Activated CD4-positive, alpha-beta memory T cell treated with anti-CD3 and anti-CD28 coated beads for 36 hours (primary cell): ENCODE measurements at regions of chr1 and their contacts with region 1.

Region 1: GRCh38 chr1:85276215-85276977 is at the start of gene BCL10:
- DNase-seq: peak; percentile 98
- H3K4me3 Mint-ChIP-seq: peak within 1 kb of the TSS; percentile 82
- H3K27ac Mint-ChIP-seq: peak within 1 kb of the TSS; percentile 92
- H3K4me1 Mint-ChIP-seq: peaks cover 50% of the 10 kb centered on the region
- H3K27me3 Mint-ChIP-seq: peaks cover 5% of the 10 kb centered on the region
- total RNA-seq, gene BCL10: 31.1 to 31.5 TPM

Region 2: DNA sequence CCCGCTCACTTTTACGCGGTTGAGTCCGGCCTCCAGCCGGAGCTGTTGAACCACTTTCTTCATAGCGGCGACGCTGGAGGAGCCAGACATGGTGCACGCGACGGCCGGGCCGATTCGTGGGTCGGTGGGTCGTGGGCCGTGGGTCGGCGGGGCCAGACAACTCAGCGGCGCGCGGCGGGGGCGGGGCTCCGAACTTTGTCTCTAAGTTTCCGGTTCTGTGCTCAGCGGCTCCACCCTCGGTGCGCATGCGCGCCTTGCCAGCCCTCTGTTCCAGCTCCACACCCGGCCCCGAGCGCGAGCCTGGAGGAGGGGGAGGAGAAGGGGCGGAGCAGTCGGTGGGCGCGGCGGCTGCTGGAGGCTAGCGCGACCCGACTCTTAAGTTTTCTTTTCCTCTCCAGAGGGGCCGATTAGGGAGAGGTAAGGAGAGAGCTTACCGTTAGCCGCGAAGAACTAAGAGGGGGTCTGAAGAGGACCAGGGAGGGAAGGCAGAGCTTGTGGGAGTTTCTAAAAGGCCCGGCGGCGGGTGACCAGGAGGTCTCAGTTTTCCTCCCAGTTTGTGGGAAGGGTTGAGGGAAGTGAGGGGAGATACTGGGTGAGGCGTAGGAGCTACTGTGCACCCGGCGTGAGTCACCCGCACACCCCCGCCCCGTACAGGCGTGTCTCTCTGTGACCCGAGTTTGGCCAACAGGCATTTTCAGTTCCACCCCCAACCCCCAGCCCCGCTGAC is 770.2 kb before region 1 on chr1 and contains the starts of genes GNG5 and SPATA1:
- CTCF ChIA-PET with region 1: no interaction called
- POLR2A ChIA-PET with region 1: no interaction called
- intact Hi-C with region 1: loop called (anchors 10 kb)
- DNase-seq: peak; percentile 98
- H3K4me3 Mint-ChIP-seq: peak within 1 kb of the TSS; percentile 95
- H3K27ac Mint-ChIP-seq: peak within 1 kb of the TSS; percentile 97
- H3K4me1 Mint-ChIP-seq: peaks cover 35% of the 10 kb centered on the region
- H3K27me3 Mint-ChIP-seq: no peaks in the 10 kb centered on the region
- total RNA-seq, gene GNG5: 139 to 143 TPM
- total RNA-seq, gene SPATA1: 3.2 to 3.8 TPM

Region 3: GRCh38 chr1:84853741-84854721 is 422.4 kb before region 1 on chr1:
- CTCF ChIA-PET with region 1: no interaction called
- POLR2A ChIA-PET with region 1: no interaction called
- intact Hi-C with region 1: loop called (anchors 1 kb)
- DNase-seq: peak; percentile 54
- H3K4me3 Mint-ChIP-seq: peak overlapping the region; percentile 4
- H3K27ac Mint-ChIP-seq: peak overlapping the region; percentile 32
- H3K4me1 Mint-ChIP-seq: peaks cover 29% of the 10 kb centered on the region
- H3K27me3 Mint-ChIP-seq: no peaks in the 10 kb centered on the region

Region 4: GRCh38 chr1:84996846-84997666 is 279.3 kb before region 1 on chr1 and contains the start of gene MCOLN2:
- CTCF ChIA-PET with region 1: no interaction called
- POLR2A ChIA-PET with region 1: interaction called, 10 read pairs
- intact Hi-C with region 1: loop called (anchors 2 kb)
- DNase-seq: peak; percentile 68
- H3K4me3 Mint-ChIP-seq: peak within 1 kb of the TSS; percentile 77
- H3K27ac Mint-ChIP-seq: peak within 1 kb of the TSS; percentile 95
- H3K4me1 Mint-ChIP-seq: peaks cover 40% of the 10 kb centered on the region
- H3K27me3 Mint-ChIP-seq: peaks cover 12% of the 10 kb centered on the region
- total RNA-seq, gene MCOLN2: 42.1 to 43.2 TPM

Region 5: GRCh38 chr1:85289207-85289847 is 12.9 kb after region 1 on chr1:
- CTCF ChIA-PET with region 1: no interaction called
- POLR2A ChIA-PET with region 1: interaction called, 4 read pairs
- intact Hi-C with region 1: loop called (anchors 1 kb)
- DNase-seq: peak; percentile 57
- H3K4me3 Mint-ChIP-seq: no peak overlapping the region
- H3K27ac Mint-ChIP-seq: no peak overlapping the region
- H3K4me1 Mint-ChIP-seq: peaks cover 12% of the 10 kb centered on the region
- H3K27me3 Mint-ChIP-seq: peaks cover 12% of the 10 kb centered on the region